Left cardiac atrium (tissue), 4 donors: ENCODE measurements at regions of chr10 and their contacts with region 1.

Region 1: GRCh38 chr10:74213571-74214162 is 62.6 kb downstream of the ADK start:
- DNase-seq: peak; percentile 35
- ATAC-seq: no peak

Region 2: GRCh38 chr10:73920089-73920488 is 293.6 kb before region 1 on chr10:
- intact Hi-C with region 1: no loop called
- DNase-seq: peak; percentile 45
- ATAC-seq: peak; percentile 66 to 69

Region 3: DNA sequence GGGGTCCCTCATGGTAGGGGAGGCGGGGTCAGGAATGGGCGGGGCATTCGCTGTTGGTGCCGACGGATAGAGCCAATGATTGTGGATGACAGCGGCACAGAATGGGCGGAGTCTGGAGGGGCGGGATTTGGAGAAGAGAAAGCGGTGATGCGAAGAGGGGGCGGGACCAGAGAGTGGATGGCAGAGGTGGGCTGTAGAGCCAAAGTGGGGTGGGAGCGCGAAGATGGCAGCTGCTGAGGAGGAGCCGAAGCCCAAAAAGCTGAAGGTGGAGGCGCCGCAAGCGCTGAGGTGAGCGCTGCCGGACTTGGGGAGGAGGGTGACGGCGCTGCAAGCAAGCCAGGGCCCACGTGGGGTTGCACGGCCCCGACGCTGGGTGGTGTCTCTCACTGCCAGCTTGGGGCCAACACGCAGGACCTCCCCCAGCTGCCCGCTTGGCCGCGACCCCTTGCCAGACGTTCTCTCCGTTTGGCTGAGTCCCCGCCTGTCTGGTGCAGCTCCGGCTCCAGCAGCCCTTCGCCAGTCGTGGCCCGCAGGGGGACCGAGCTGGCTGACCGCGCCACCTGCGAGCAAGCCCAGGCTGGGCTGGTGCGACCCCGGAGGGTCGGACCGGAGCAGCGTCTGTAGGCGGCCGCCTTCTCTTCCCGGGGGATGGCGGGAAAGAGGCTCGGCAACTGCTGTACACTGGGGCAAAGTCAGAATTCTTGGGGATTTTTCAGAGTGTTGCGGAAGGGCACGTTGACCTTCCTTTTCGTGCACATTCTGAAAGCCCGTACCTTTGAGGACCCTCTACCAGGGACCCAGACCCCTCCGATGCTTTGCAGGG is 62.4 kb before region 1 on chr10 and contains the start of gene ADK:
- intact Hi-C with region 1: loop called in 1 of 2 experiments (anchors 10 kb)
- DNase-seq: peak; percentile 100
- ATAC-seq: peak; percentile 97 to 98
- total RNA-seq, gene ADK: 31.2 to 34.9 TPM

Region 4: GRCh38 chr10:74589226-74589673 is 375.6 kb after region 1 on chr10:
- intact Hi-C with region 1: no loop called
- DNase-seq: peak; percentile 93
- ATAC-seq: peak; percentile 94 to 97